Tibial artery (tissue), 4 donors: ENCODE measurements at regions of chr1 and their contacts with region 1.

Region 1: DNA sequence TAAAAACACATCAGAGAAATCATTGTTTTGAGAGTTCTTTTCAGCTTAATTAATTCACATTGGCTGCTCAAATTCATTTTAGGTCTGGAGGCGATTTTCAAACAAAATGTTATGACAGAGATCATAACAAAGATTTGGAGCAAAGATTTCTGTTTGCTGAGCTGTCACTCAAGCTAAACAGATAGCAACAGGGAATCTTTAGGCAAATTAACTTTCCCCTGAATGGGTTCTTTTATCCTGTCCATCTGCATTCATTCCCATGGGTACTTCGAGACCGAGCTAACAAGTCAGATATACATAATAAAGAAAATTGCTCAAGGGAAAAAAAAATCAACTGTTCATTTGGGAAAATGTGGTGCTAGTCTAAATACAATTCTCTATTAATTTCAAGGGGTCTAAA is 30.2 kb upstream of the CA6 start:
- DNase-seq: no peak
- H3K4me3 ChIP-seq: no peak overlapping the region
- H3K27ac ChIP-seq: no peak overlapping the region
- H3K4me1 ChIP-seq: no peaks in the 10 kb centered on the region
- H3K27me3 ChIP-seq: no peaks in the 10 kb centered on the region
- CTCF ChIP-seq: no peak

Region 2: GRCh38 chr1:8858888-8859706 is 56.3 kb before region 1 on chr1:
- intact Hi-C with region 1: loop called (anchors 5 kb)
- DNase-seq: peak in 1 of 2 donors; percentile 41
- H3K4me3 ChIP-seq: no peak overlapping the region
- H3K27ac ChIP-seq: peak overlapping the region; percentile 29 to 55
- H3K4me1 ChIP-seq: peaks cover 0 to 31% (median 16%) of the 10 kb centered on the region in 4 donors
- H3K27me3 ChIP-seq: no peaks in the 10 kb centered on the region
- CTCF ChIP-seq: peak; percentile 70 to 72

Region 3: DNA sequence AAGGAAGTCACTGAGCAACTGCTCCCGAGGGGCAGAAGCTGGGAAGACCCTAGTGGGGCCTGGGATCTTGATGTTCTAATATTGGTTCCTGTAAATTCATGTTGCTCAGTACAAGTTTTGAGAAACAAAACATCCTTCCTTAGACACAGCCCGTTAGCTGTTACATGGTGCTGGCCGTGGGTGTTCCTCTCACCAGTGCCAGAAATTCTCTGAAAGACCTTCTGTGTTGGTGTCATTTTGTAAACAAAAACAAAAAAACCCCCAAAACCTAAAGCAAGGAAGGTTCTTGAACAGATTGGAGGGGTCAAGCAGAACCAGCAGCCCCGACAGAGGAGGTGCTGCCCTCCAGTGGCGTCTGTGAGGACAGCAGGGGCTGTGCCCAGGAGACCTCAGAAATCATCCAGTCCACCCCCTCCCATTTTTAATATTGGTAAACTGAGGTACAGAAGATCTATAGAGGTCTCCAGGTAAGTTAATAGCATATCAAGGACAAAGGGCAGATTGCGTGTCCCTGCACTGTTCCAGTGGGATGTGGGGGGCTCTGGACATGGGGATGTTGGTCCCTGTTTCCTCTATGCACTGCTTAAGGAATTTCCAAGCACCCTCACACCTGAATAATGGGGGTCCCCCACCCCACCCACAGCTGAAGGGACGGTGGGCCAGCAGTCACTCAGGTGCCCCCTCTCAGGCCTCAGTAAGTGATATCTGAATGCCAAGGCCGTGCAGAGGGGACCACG is 72.6 kb after region 1 on chr1:
- intact Hi-C with region 1: loop called (anchors 5 kb)
- DNase-seq: peak in 1 of 2 donors; percentile 72
- H3K4me3 ChIP-seq: no peak overlapping the region
- H3K27ac ChIP-seq: peak overlapping the region in 1 of 2 donors; percentile 38
- H3K4me1 ChIP-seq: peaks cover 0 to 26% (median 12%) of the 10 kb centered on the region in 4 donors
- H3K27me3 ChIP-seq: no peaks in the 10 kb centered on the region
- CTCF ChIP-seq: peak; percentile 86 to 94

Region 4: DNA sequence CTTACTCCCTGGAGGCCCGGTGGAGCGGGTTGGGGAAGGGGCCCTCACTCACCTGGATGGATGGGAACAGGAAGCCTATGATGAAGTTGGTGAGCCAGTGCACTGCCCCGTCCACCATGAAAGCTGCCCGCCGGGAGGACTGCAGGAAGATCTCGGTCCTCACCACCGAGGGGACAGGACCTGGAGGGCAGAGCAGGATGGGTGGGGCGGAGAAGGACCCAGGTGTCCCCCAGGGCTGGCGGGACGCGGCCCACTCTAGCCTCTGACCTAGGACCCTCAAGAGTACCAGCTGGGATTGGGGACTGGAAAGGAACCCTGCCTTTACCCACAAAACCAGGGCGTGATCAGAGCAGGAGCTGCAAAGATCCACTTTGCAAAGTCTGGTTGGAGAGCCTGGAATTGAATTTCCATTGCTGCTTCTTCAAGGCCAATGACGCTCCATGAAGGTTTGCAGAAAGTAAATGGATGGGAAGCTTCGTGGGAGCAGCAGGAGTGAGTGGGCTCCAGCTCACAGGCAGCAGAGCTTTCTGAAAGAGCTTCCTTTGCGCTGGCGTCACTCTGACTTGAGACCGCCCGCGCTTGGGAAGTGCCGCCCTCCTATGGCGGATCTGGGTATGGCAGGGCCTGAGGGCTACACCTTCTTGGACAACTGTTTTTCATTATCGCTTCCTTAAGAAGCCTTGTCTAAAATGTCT is 89.4 kb after region 1 on chr1:
- intact Hi-C with region 1: loop called (anchors 5 kb)
- DNase-seq: peak; percentile 70 to 83
- H3K4me3 ChIP-seq: no peak overlapping the region
- H3K27ac ChIP-seq: no peak overlapping the region
- H3K4me1 ChIP-seq: peaks cover 0 to 15% (median 0%) of the 10 kb centered on the region in 4 donors
- H3K27me3 ChIP-seq: no peaks in the 10 kb centered on the region
- CTCF ChIP-seq: peak; percentile 85 to 97

Region 5: GRCh38 chr1:9101510-9102146 is 186.2 kb after region 1 on chr1:
- intact Hi-C with region 1: loop called (anchors 5 kb)
- DNase-seq: no peak
- H3K4me3 ChIP-seq: no peak overlapping the region
- H3K27ac ChIP-seq: no peak overlapping the region
- H3K4me1 ChIP-seq: no peaks in the 10 kb centered on the region
- H3K27me3 ChIP-seq: no peaks in the 10 kb centered on the region
- CTCF ChIP-seq: peak; percentile 42 to 44